ENCODE measurements at regions of chr3 and their contacts with region 1.

Region 1: GRCh38 chr3:48952510-48953118 is 34.0 kb downstream of the ARIH2 start:
- DNase-seq: no peak
- ATAC-seq: peak; percentile 31
- H3K4me3 Mint-ChIP-seq: no peak overlapping the region
- H3K27ac Mint-ChIP-seq: no peak overlapping the region
- H3K4me1 Mint-ChIP-seq: no peaks in the 10 kb centered on the region
- H3K27me3 Mint-ChIP-seq: no peaks in the 10 kb centered on the region
- CTCF ChIP-seq: no peak

Region 2: DNA sequence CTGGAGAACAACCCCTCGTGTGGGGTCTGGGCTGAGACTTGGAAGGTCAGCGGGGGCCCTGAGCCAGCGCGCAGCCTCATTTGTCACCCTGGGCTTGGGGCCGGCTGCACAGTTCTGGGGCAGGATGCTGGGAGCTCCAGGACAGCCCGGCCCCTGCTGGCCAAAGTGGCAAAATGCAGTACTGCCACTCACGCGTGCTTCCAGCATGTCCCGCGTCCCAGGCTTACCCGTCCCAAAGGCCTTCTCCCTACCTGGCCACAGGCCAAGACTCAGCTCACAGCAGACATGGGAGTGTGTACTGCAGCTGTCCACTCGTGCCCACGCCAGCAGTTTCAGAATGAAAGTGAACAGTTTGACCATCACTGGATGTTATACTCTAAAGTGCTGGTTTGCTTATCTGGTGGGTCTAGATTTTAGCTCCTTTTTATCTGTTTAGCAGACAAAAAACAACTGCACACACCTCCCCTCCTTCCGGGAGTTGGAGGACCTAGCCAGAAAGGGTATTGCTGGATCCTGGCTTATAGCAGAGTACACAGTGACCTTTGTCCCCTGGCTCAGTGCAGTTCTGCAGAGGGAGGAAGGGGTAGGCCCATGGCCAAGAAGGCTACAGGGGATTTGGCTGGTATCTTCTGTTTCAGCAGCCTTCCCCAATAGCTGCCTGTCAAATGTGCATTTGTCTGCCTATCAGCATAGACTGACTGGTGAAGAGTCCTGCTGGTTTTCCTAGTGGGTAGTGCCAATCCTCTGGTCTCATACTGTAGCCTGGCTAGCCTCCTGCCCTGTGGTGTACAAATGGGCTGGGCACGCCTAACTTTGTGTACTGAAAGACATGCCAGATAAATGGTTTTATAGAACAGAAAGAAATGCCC is 212.4 kb before region 1 on chr3:
- CTCF ChIA-PET with region 1: interaction called, 5 read pairs
- POLR2A ChIA-PET with region 1: interaction called, 3 read pairs
- intact Hi-C with region 1: loop called (anchors 1 kb)
- DNase-seq: peak; percentile 42
- ATAC-seq: peak; percentile 97
- H3K4me3 Mint-ChIP-seq: no peak overlapping the region
- H3K27ac Mint-ChIP-seq: no peak overlapping the region
- H3K4me1 Mint-ChIP-seq: peaks cover 10% of the 10 kb centered on the region
- H3K27me3 Mint-ChIP-seq: no peaks in the 10 kb centered on the region
- CTCF ChIP-seq: no peak

Region 3: DNA sequence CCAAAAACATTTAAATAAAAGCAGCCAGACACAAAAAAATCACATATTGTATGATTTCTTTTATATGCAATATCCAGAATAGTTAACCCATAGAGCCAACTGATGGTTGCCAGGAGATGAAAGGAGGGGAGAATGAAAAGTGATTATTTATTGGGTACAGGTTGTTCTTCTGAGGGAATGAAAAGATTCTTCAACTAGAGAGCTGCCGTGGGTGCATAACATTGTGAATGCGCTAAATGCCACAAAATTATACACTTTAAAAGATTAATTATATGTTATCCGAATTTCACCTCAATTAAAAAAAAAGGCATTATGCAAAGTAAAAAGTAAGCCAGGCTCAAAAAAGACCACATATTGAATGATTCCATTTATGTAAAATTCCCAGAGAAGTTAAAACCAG is 141.1 kb before region 1 on chr3:
- CTCF ChIA-PET with region 1: no interaction called
- POLR2A ChIA-PET with region 1: no interaction called
- intact Hi-C with region 1: no loop called
- DNase-seq: no peak
- ATAC-seq: no peak
- H3K4me3 Mint-ChIP-seq: no peak overlapping the region
- H3K27ac Mint-ChIP-seq: no peak overlapping the region
- H3K4me1 Mint-ChIP-seq: peaks cover 27% of the 10 kb centered on the region
- H3K27me3 Mint-ChIP-seq: no peaks in the 10 kb centered on the region
- CTCF ChIP-seq: no peak

Region 4: GRCh38 chr3:49017971-49018706 is 65.5 kb after region 1 on chr3 and contains the start of gene DALRD3:
- CTCF ChIA-PET with region 1: no interaction called
- POLR2A ChIA-PET with region 1: no interaction called
- intact Hi-C with region 1: no loop called
- DNase-seq: peak; percentile 64
- ATAC-seq: peak; percentile 2
- H3K4me3 Mint-ChIP-seq: peak within 1 kb of the TSS; percentile 94
- H3K27ac Mint-ChIP-seq: peak within 1 kb of the TSS; percentile 84
- H3K4me1 Mint-ChIP-seq: peaks cover 39% of the 10 kb centered on the region
- H3K27me3 Mint-ChIP-seq: no peaks in the 10 kb centered on the region
- CTCF ChIP-seq: no peak
- total RNA-seq, gene DALRD3: 36.7 and 38.3 TPM in 2 replicates

Measured in activated B cell treated with CpG ODN at 0.5 μM for 24 hours (primary cell).